Gastrocnemius medialis (tissue), 4 donors: ENCODE measurements at regions of chr9 and their contacts with region 1.

Region 1: GRCh38 chr9:9229269-9229668 is 1383.5 kb downstream of the PTPRD start:
- DNase-seq: no peak
- ATAC-seq: no peak
- H3K4me3 ChIP-seq: no peak overlapping the region
- H3K27ac ChIP-seq: no peak overlapping the region
- H3K4me1 ChIP-seq: no peaks in the 10 kb centered on the region
- H3K27me3 ChIP-seq: no peaks in the 10 kb centered on the region
- CTCF ChIP-seq: no peak
- POLR2A ChIP-seq: no peak

Region 2: GRCh38 chr9:9341203-9341602 is 111.9 kb after region 1 on chr9:
- in situ Hi-C with region 1: loop called in 1 of 4 experiments (anchors 25 kb)
- intact Hi-C with region 1: no loop called
- DNase-seq: no peak
- ATAC-seq: no peak
- H3K4me3 ChIP-seq: no peak overlapping the region
- H3K27ac ChIP-seq: no peak overlapping the region
- H3K4me1 ChIP-seq: no peaks in the 10 kb centered on the region
- H3K27me3 ChIP-seq: no peaks in the 10 kb centered on the region
- CTCF ChIP-seq: no peak
- POLR2A ChIP-seq: no peak